Mammary epithelial cell (primary cell): ENCODE measurements at regions of chr12 and their contacts with region 1.

Region 1: GRCh38 chr12:569803-570434 is 93.3 kb downstream of the NINJ2 start:
- DNase-seq: peak; percentile 77
- H3K4me3 ChIP-seq: peak overlapping the region; percentile 48 to 84 (median 59)
- H3K27ac ChIP-seq: peak overlapping the region; percentile 91
- H3K4me1 ChIP-seq: peaks cover 32% of the 10 kb centered on the region
- H3K27me3 ChIP-seq: no peaks in the 10 kb centered on the region
- CTCF ChIP-seq: peak; percentile 71 to 89

Region 2: DNA sequence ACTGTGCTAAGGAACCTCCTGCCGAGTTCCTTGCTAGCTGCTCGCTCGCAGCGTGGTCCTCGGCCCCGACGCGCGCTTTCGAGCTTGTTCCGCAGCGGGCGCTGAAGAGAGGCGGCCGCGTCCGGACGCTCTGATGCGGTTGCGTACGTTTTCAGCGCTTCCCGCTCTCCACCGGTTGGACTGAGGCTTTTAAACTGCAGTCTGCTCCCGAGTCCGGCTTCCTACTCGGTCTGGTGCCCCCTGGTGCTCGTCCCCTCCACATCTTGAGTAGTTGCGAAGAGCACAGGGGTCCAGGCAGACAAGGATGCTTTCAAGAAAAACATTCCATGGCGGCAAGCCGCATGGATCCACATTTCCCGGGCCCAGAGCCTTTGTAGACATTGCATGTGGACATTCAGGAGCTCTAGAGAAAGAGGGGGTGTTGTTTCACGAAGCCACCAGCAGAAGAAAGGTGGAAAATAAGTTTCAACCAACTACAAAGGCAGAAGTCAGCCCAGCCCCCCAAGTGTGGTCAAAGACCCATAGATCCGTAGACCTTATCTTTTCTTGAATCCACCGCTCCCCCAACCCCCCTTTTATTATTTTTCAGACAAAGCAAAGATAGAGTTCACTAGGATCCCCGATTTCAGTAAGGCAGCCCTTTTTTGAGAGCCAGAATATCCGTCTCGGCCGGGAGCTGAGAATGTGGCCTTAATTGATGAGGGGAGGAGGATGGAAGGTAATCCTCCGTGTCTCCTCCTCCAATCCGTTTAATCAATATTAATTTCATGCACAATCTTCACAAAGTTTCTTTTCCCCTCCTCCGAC is 181.5 kb after region 1 on chr12:
- CTCF ChIA-PET with region 1: no interaction called
- dilution Hi-C with region 1: no loop called
- in situ Hi-C with region 1: loop called (anchors 5 to 10 kb)
- intact Hi-C with region 1: loop called (anchors 1 kb)
- DNase-seq: peak; percentile 92
- H3K4me3 ChIP-seq: peak overlapping the region; percentile 49 to 58 (median 57)
- H3K27ac ChIP-seq: peak overlapping the region; percentile 59
- H3K4me1 ChIP-seq: peaks cover 14% of the 10 kb centered on the region
- H3K27me3 ChIP-seq: no peaks in the 10 kb centered on the region
- CTCF ChIP-seq: peak; percentile 63 to 80

Region 3: DNA sequence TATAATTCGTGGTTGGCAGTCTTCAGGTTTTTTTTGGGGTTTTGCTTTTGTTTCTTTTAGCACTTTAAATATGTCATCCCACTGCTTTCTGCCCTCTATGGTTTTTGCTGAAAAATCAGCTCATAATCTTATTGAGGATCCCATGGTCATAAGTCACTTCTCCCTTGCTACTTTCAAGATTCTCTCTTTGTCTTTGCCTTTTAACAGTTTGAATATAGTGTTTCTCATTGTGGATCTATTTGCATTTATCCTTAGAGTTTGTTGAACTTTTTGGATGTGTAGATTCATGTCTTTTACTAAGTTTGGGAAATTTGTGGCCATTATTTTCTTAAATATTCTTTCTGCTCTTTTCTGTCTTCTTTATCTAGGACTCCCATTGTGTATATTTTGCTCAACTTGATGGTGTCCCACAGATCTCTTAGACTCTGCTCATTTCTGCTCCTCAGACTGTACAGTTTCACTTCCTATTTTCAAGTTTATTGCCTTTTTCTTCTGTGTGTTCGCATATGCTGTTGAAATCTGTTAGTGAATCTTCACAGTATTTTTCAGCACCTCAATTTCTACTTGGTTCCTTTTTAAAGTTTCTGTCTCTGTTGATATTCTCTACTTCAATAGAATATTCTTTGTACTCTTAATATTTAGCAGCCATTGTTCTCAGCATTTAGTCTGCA is 253.2 kb after region 1 on chr12:
- CTCF ChIA-PET with region 1: no interaction called
- dilution Hi-C with region 1: loop called (anchors 5 kb)
- in situ Hi-C with region 1: no loop called
- intact Hi-C with region 1: no loop called
- DNase-seq: no peak
- H3K4me3 ChIP-seq: no peak overlapping the region
- H3K27ac ChIP-seq: no peak overlapping the region
- H3K4me1 ChIP-seq: no peaks in the 10 kb centered on the region
- H3K27me3 ChIP-seq: no peaks in the 10 kb centered on the region
- CTCF ChIP-seq: no peak

Region 4: GRCh38 chr12:1093166-1093751 is 523.3 kb after region 1 on chr12:
- CTCF ChIA-PET with region 1: interaction called, 6 read pairs
- dilution Hi-C with region 1: no loop called
- in situ Hi-C with region 1: no loop called
- intact Hi-C with region 1: loop called (anchors 5 kb)
- DNase-seq: peak; percentile 45
- H3K4me3 ChIP-seq: no peak overlapping the region
- H3K27ac ChIP-seq: no peak overlapping the region
- H3K4me1 ChIP-seq: no peaks in the 10 kb centered on the region
- H3K27me3 ChIP-seq: no peaks in the 10 kb centered on the region
- CTCF ChIP-seq: peak; percentile 70 to 82

Region 5: DNA sequence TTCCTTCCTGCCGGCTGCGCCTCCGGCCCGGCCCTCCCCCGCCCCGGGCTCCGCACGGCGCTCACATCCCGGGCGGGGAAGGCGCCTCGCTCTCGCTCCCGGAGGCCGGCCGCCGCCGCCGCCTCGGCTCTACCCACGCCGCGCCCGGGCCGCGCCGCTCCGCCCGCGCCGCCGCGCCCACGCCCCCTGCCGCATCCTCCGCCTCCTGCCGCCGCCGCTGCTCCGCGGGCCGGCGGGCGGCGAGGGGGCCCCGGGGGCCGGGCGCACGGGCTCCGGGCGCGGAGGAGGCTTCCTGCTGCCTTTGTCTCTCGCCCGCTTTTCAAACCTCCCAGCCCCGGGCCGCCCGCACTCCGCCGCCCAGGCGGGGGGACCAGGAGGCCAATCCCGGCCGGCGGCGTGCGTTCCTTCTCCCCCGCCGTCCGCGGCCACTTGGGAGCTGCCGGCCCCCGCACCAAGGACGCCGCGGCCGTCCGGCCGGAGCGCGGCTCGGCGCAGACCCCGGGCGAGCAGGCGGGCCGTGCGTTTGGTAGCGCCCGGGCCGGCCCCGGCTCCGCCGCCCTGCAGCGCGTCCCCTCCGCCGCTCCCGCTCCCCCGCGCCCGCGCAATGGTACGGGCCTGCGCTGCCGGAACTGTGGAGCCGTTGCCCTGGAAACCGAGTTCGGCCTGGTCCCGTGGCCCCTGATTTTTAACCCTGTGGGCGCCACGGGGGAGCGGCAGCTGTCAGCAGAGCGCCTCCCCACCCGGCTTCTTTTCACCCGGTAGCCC is 1024.5 kb after region 1 on chr12 and contains the start of gene FBXL14:
- CTCF ChIA-PET with region 1: no interaction called
- dilution Hi-C with region 1: no loop called
- in situ Hi-C with region 1: loop called (anchors 25 kb)
- intact Hi-C with region 1: loop called (anchors 5 kb)
- DNase-seq: peak; percentile 69
- H3K4me3 ChIP-seq: peak within 1 kb of the TSS; percentile 49 to 73 (median 69)
- H3K27ac ChIP-seq: peak within 1 kb of the TSS; percentile 53
- H3K4me1 ChIP-seq: peaks cover 43% of the 10 kb centered on the region
- H3K27me3 ChIP-seq: no peaks in the 10 kb centered on the region
- CTCF ChIP-seq: no peak
- total RNA-seq, gene FBXL14: 8.8 to 10.0 TPM